ENCODE measurements at regions of chr18 and their contacts with region 1.

Region 1: GRCh38 chr18:46641917-46642316 is 15.1 kb downstream of the LOXHD1 start:
- DNase-seq: no peak
- ATAC-seq: no peak
- H3K4me3 ChIP-seq: no peak overlapping the region
- H3K27ac ChIP-seq: no peak overlapping the region
- H3K4me1 ChIP-seq: no peaks in the 10 kb centered on the region
- H3K27me3 ChIP-seq: no peaks in the 10 kb centered on the region
- CTCF ChIP-seq: no peak
- POLR2A ChIP-seq: no peak

Region 2: DNA sequence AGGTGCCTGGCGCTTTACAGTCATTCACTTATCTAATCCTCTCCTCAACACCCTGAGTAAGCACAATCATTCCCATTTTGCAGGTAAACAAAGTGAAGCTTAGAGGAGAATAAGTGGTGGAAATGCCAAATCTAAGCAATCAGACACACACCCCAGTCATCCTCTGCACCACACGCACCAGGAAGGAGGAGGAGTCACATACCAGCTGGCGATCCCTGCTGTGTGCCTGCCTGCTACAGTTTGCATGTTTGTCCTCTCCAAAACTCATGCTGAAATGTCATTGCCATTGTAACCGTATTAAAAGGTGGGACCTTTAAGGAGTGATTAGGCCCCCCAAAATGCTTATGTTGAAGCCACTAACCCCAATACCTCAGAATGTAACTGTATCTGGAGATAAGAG is 78.6 kb before region 1 on chr18:
- in situ Hi-C with region 1: no loop called
- intact Hi-C with region 1: loop called (anchors 10 kb)
- DNase-seq: no peak
- ATAC-seq: no peak
- H3K4me3 ChIP-seq: no peak overlapping the region
- H3K27ac ChIP-seq: no peak overlapping the region
- H3K4me1 ChIP-seq: no peaks in the 10 kb centered on the region
- H3K27me3 ChIP-seq: no peaks in the 10 kb centered on the region
- CTCF ChIP-seq: no peak
- POLR2A ChIP-seq: no peak